ENCODE measurements at regions of chr19 and their contacts with region 1.

Region 1: DNA sequence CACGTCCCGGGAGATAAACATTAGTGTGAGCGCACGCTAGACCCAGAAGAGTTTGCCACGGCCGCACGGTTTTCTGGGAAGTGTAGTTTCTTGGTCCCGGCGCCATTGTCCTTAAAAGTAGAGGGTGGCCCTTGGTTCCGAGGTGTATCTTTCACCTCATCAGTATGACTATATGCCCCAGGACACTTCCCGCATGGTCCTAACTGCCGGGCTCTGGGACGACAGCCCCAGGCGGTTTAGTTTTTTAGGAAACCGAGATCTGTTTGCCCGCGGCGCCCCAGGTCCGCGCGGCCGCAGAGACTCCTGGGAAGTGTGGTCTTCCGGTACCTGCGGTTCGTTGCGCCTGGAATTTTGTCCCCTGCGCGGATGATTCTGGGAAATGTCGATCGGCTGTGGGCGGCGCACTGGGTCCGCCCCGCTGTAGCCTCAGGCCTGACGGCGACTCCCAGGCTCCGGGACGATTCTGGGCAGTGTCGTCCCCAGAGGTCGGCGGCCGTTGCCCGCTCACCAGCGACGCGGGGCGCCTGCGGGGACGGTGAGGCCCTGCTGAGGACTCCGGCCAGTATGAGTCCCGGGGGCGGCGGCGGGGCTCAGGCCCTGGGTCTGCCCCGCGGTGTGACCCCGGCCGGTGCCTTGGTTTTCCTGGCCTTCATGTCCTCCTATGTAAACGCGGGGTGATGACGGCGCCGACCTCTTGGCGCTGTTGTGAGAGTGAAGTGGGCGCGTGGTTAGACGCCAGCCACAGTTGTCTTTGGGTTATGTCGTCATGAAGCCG is at the start of gene ZNF181:
- DNase-seq: peak; percentile 63 to 87 (median 79)
- ATAC-seq: peak; percentile 87 to 91 (median 90)
- H3K4me3 ChIP-seq: peak within 1 kb of the TSS; percentile 82 to 97
- H3K4me3 Mint-ChIP-seq: peak within 1 kb of the TSS; percentile 94 to 96 (median 94)
- H3K27ac ChIP-seq: peak within 1 kb of the TSS; percentile 74
- H3K27ac Mint-ChIP-seq: peak within 1 kb of the TSS; percentile 97 to 98
- H3K4me1 ChIP-seq: peaks cover 10 to 29% of the 10 kb centered on the region in 2 experiments
- H3K4me1 Mint-ChIP-seq: peaks cover 25 to 36% (median 30%) of the 10 kb centered on the region in 3 donors
- H3K27me3 ChIP-seq: peaks cover 0 to 4% of the 10 kb centered on the region in 2 experiments
- H3K27me3 Mint-ChIP-seq: peaks cover 2 to 3% of the 10 kb centered on the region in 2 donors
- total RNA-seq, gene ZNF181: 4.5 to 22.9 (median 17.7) TPM

Region 2: DNA sequence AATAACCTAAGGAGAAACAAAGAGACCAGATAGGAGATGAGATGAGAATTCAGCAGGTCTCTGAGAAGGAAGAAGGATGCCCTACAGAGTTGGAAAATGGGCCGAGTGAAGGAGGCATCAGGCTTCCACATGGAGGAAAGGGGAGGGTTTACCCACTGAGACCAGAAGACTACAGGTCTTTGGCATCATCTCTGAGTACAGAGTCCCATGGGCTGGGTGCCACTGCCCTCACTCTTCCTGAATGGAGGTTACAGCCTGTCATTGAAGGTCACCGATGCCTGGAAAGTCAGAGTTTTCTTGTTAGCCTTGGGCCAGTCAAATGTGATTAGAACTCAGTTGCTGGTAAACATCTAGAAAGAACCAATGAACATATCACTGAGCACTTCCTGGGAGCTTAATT is 46.7 kb before region 1 on chr19:
- CTCF ChIA-PET with region 1: no interaction called
- POLR2A ChIA-PET with region 1: interaction called in 1 of 2 experiments, 12 read pairs
- DNase-seq: no peak
- ATAC-seq: no peak
- H3K4me3 ChIP-seq: peak overlapping the region in 1 of 2 donors; percentile 23
- H3K4me3 Mint-ChIP-seq: no peak overlapping the region
- H3K27ac ChIP-seq: no peak overlapping the region
- H3K27ac Mint-ChIP-seq: no peak overlapping the region
- H3K4me1 ChIP-seq: no peaks in the 10 kb centered on the region
- H3K4me1 Mint-ChIP-seq: no peaks in the 10 kb centered on the region
- H3K27me3 ChIP-seq: no peaks in the 10 kb centered on the region
- H3K27me3 Mint-ChIP-seq: peaks cover 7 to 17% of the 10 kb centered on the region in 2 donors

Measured in T-cell (primary cell).